ENCODE measurements at regions of chr11 and their contacts with region 1.

Region 1: GRCh38 chr11:62556108-62556871 is 9.7 kb upstream of the AHNAK start:
- DNase-seq: peak; percentile 95 to 96
- ATAC-seq: peak; percentile 81
- H3K4me3 ChIP-seq: no peak overlapping the region
- H3K27ac ChIP-seq: peak overlapping the region; percentile 71 to 83
- H3K4me1 ChIP-seq: peaks cover 2 to 5% of the 10 kb centered on the region in 2 donors
- H3K27me3 ChIP-seq: no peaks in the 10 kb centered on the region

Region 2: GRCh38 chr11:62400760-62401159 is 155.5 kb before region 1 on chr11:
- intact Hi-C with region 1: loop called in 1 of 2 experiments (anchors 5 kb)
- DNase-seq: peak; percentile 92 to 93
- ATAC-seq: peak; percentile 69
- H3K4me3 ChIP-seq: no peak overlapping the region
- H3K27ac ChIP-seq: peak overlapping the region; percentile 54 to 81
- H3K4me1 ChIP-seq: peaks cover 0 to 11% of the 10 kb centered on the region in 2 donors
- H3K27me3 ChIP-seq: no peaks in the 10 kb centered on the region

Region 3: GRCh38 chr11:62427630-62428233 is 128.6 kb before region 1 on chr11:
- intact Hi-C with region 1: loop called in 1 of 2 experiments (anchors 1 kb)
- DNase-seq: no peak
- ATAC-seq: no peak
- H3K4me3 ChIP-seq: no peak overlapping the region
- H3K27ac ChIP-seq: no peak overlapping the region
- H3K4me1 ChIP-seq: no peaks in the 10 kb centered on the region
- H3K27me3 ChIP-seq: no peaks in the 10 kb centered on the region

Measured in aorta (tissue), 5 donors.